WTC11 (cell line): ENCODE measurements at regions of chr1 and their contacts with region 1.

Region 1: GRCh38 chr1:234309598-234310459 is 63.4 kb upstream of the COA6 start:
- DNase-seq: peak; percentile 80
- ATAC-seq: peak; percentile 91
- H3K4me3 Mint-ChIP-seq: no peak overlapping the region
- H3K27ac Mint-ChIP-seq: no peak overlapping the region
- H3K4me1 Mint-ChIP-seq: peaks cover 20% of the 10 kb centered on the region
- H3K27me3 Mint-ChIP-seq: peaks cover 6% of the 10 kb centered on the region; the same call in 1 of the 2 replicates
- CTCF ChIP-seq: peak; percentile 84

Region 2: DNA sequence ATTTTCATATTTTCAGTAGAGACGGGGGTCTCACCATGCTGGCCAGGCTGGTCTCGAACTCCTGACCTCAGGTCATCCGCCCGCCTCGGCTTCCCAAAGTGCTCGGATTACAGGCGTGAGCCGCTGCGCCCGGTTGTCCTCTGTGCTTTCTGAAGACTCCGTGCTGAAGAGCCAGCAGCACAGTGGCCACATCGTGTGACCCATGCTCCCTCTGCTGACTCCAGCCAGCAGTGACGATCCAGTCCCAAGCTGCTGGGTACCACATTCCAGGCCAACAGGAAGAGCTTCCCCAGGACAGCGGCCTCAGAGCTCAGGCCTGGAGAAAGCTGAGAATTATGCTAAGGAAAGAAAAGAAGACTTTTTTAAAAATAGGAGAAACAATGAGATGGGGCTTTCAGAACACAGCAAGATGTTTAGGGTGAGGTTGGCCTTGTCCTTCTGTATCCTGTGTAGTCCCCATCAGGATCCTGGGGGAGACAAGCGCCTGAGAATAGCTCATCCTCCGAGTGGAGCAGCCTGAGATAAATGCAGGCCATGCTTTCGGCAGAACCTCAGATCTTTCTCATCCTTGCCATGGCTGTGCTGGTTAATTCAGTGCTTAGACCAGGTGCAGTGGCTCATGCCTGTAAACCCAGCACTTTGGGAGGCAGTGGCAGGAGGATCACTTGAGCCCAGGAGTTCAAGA is 198.2 kb before region 1 on chr1:
- CTCF ChIA-PET with region 1: interaction called, 13 read pairs
- POLR2A ChIA-PET with region 1: no interaction called
- DNase-seq: peak; percentile 76
- ATAC-seq: peak; percentile 99
- H3K4me3 Mint-ChIP-seq: no peak overlapping the region
- H3K27ac Mint-ChIP-seq: peak overlapping the region; percentile 18; the same call in 1 of the 2 replicates
- H3K4me1 Mint-ChIP-seq: peaks cover 5% of the 10 kb centered on the region; the same call in 1 of the 2 replicates
- H3K27me3 Mint-ChIP-seq: peaks cover 5% of the 10 kb centered on the region
- CTCF ChIP-seq: no peak

Region 3: DNA sequence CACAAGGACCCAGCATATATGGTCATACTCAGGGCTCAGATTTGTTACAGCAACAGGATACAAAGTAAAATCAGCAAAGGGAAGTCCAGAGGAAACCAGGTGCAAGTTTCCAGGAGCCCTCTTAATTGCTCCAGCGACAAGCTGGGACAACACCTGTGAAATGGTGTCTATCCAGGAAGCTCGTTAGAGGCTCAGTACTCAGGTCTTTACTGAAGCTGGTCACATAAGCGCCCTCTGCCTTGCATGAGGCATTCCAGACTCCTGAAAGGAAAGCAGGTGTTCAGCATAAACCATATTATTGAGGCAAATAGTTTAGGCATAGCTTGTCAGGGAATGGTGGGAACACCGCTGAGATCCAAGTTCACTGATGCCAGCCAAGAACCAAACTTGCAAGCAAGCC is 174.3 kb before region 1 on chr1:
- CTCF ChIA-PET with region 1: interaction called, 11 read pairs
- POLR2A ChIA-PET with region 1: no interaction called
- DNase-seq: no peak
- ATAC-seq: peak; percentile 61
- H3K4me3 Mint-ChIP-seq: no peak overlapping the region
- H3K27ac Mint-ChIP-seq: no peak overlapping the region
- H3K4me1 Mint-ChIP-seq: 0 out of 2 replicates have a peak, but pooled peaks cover 6% of the 10 kb centered on the region
- H3K27me3 Mint-ChIP-seq: no peaks in the 10 kb centered on the region; the same call in 1 of the 2 replicates
- CTCF ChIP-seq: no peak

Region 4: DNA sequence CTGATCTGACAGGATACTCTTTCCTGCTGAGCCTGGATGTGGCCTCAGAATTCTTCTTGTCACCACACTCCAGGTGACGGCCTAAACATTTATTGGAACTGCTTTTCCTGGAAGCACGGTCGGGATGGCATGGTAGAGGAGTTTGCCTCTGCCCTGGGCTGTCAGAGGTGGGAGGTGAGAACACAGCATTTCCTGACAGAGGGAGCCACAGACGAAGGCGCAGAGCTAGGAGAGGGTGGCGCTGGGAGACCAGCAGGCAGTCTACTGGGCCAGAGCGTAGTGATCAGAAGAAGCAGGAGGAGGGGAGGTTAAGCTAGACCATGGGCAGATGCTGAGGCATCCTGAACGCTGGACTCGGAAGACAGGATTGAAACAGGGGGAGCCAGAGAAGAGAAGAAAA is 90.1 kb before region 1 on chr1:
- CTCF ChIA-PET with region 1: interaction called, 105 read pairs
- POLR2A ChIA-PET with region 1: interaction called, 7 read pairs
- DNase-seq: no peak
- ATAC-seq: no peak
- H3K4me3 Mint-ChIP-seq: no peak overlapping the region
- H3K27ac Mint-ChIP-seq: no peak overlapping the region
- H3K4me1 Mint-ChIP-seq: peaks cover 7% of the 10 kb centered on the region
- H3K27me3 Mint-ChIP-seq: peaks cover 7% of the 10 kb centered on the region
- CTCF ChIP-seq: no peak

Region 5: GRCh38 chr1:234292011-234292410 is 17.8 kb before region 1 on chr1:
- CTCF ChIA-PET with region 1: interaction called, 32 read pairs
- POLR2A ChIA-PET with region 1: no interaction called
- DNase-seq: no peak
- ATAC-seq: no peak
- H3K4me3 Mint-ChIP-seq: no peak overlapping the region
- H3K27ac Mint-ChIP-seq: no peak overlapping the region
- H3K4me1 Mint-ChIP-seq: 0 out of 2 replicates have a peak, but pooled peaks cover 2% of the 10 kb centered on the region
- H3K27me3 Mint-ChIP-seq: peaks cover 2% of the 10 kb centered on the region; the same call in 1 of the 2 replicates
- CTCF ChIP-seq: no peak

Region 6: DNA sequence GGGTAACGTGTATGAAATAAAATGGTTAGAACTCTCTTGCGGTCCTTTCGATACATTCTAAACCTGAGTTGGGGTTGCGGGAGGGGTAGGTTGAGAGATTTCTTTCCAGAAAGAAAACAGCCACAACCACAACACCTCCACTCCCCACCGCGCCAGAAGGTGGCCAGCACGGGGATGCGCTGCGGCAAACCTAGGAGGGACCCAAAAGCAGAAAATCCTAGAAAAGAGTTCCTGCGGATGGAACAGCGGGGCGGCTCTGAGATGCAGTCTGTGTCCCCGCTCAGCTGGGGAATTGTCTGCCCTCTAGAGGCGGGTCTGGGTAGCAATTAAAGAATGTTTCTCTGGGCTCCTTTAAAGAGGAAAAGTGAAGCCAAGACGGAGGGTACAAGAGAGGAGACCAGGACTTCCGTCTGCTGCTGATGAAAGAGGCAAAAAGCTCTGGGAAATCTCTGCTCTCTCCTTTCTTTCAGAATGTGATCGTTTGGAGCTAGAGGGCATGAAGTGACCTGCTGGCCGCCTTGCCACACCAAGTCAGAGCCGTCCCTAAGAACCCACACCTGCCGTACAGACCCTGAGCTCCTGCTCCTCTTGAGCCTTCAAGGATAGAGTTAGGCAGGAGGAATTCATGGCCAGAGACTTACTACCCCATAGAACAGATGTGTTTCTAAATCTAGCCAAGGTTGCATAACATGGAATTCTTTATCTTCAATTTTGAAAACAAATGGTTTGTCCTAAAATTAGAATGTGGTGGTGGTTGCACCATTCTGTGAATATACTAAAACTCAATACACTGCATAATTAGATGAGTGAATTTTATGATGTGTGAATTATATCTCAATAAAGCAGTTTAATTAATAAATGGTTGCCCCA is 16.9 kb after region 1 on chr1:
- CTCF ChIA-PET with region 1: interaction called, 41 read pairs
- POLR2A ChIA-PET with region 1: no interaction called
- DNase-seq: peak; percentile 79
- ATAC-seq: peak; percentile 81
- H3K4me3 Mint-ChIP-seq: peak overlapping the region; percentile 53
- H3K27ac Mint-ChIP-seq: no peak overlapping the region
- H3K4me1 Mint-ChIP-seq: peaks cover 9% of the 10 kb centered on the region
- H3K27me3 Mint-ChIP-seq: peaks cover 26% of the 10 kb centered on the region
- CTCF ChIP-seq: peak; percentile 65

Region 7: DNA sequence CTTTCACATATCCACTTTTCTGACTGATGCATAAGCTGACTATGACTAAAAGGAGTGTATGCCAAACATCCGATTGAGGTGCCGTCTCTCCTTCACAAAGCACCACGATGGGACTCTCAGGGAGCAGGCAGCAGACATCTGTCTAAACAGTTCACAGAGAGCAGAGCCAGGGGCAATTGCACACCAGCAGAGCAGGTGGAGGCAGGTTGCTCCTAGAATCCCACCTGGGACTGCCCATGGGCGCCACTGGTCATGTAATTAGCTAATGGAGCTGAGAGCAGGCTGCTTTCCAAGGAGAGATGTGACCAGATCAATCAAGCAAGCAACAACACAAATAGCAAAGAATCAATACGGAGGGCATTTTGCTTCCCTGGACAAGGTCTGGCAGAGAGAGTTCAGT is 32.9 kb after region 1 on chr1:
- CTCF ChIA-PET with region 1: no interaction called
- POLR2A ChIA-PET with region 1: no interaction called
- DNase-seq: no peak
- ATAC-seq: no peak
- H3K4me3 Mint-ChIP-seq: no peak overlapping the region
- H3K27ac Mint-ChIP-seq: no peak overlapping the region
- H3K4me1 Mint-ChIP-seq: no peaks in the 10 kb centered on the region
- H3K27me3 Mint-ChIP-seq: no peaks in the 10 kb centered on the region; the same call in 1 of the 2 replicates
- CTCF ChIP-seq: no peak

Region 8: DNA sequence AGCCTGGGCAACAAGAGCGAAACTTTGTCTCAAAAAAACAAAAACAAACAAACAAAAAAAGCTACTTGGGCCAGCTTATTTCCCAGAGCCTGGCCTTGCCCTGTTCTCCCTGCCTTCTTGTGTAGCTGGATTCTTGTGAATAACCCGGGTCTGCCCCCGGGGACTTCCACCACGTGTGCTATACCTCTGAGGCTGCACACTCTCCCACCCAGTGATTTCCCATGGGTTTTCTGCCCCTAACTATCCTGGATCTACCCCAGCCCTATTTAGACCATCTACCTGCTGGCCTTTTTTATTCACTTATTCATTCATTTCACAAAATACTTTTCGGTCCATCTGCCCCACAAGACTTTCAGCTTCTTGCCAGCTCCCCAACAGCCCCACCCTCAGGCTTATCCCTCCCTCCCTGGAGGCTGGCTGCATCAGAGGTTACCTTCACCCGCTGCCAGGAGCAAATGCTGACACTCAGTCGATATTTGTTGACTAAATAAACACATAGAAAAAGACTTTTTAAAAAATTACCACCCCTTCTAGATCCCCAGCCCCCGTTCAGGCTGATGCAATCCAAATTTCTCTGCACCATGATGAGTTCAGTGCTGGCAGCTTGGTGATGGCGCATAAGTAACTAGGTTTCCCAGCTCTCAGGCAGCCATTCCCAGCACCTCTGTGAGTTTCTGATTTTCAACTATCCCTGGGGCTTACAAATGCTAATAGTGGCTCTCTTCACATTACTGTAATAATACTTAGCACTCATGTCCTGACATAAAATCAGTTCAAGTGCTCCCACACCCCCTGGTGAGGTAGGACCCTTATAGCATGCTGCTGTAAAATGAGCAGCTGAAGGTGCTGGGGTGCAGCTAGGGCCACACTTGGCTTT is 199.9 kb after region 1 on chr1:
- CTCF ChIA-PET with region 1: no interaction called
- POLR2A ChIA-PET with region 1: no interaction called
- DNase-seq: no peak
- ATAC-seq: peak; percentile 23; the same call in 1 of the 2 replicates
- H3K4me3 Mint-ChIP-seq: 0 out of 2 replicates have a peak overlapping the region, but pooled peaks have one; percentile 14
- H3K27ac Mint-ChIP-seq: peak overlapping the region; percentile 86
- H3K4me1 Mint-ChIP-seq: peaks cover 51% of the 10 kb centered on the region
- H3K27me3 Mint-ChIP-seq: no peaks in the 10 kb centered on the region
- CTCF ChIP-seq: no peak